Heart right ventricle (tissue), 16 donors: ENCODE measurements at regions of chr1 and their contacts with region 1.

Region 1: GRCh38 chr1:180178511-180179161 is 24.0 kb downstream of the QSOX1 start:
- DNase-seq: peak; percentile 52 to 72
- ATAC-seq: peak in 2 of 8 donors; percentile 28 to 31
- H3K4me3 ChIP-seq: no peak overlapping the region
- H3K27ac ChIP-seq: no peak overlapping the region
- H3K4me1 ChIP-seq: peaks cover 6 to 30% (median 21%) of the 10 kb centered on the region in 9 donors
- H3K27me3 ChIP-seq: no peaks in the 10 kb centered on the region
- CTCF ChIP-seq: peak; percentile 91 to 97 (median 96)

Region 2: GRCh38 chr1:179706339-179706941 is 472.2 kb before region 1 on chr1:
- intact Hi-C with region 1: loop called in 3 of 10 experiments (anchors 5 to 10 kb)
- DNase-seq: peak; percentile 24 to 70
- ATAC-seq: no peak
- H3K4me3 ChIP-seq: no peak overlapping the region
- H3K27ac ChIP-seq: peak overlapping the region in 1 of 10 donors; percentile 30
- H3K4me1 ChIP-seq: peaks cover 3 to 40% (median 23%) of the 10 kb centered on the region in 9 donors
- H3K27me3 ChIP-seq: peaks cover 0 to 4% (median 0%) of the 10 kb centered on the region in 7 donors
- CTCF ChIP-seq: peak; percentile 58 to 89 (median 79)

Region 3: GRCh38 chr1:179867807-179868330 is 310.8 kb before region 1 on chr1:
- intact Hi-C with region 1: loop called in 8 of 10 experiments (anchors 5 to 10 kb)
- DNase-seq: peak in 1 of 2 donors; percentile 25
- ATAC-seq: peak in 5 of 8 donors; percentile 29 to 74 (median 53)
- H3K4me3 ChIP-seq: no peak overlapping the region
- H3K27ac ChIP-seq: no peak overlapping the region
- H3K4me1 ChIP-seq: peaks cover 0 to 45% (median 30%) of the 10 kb centered on the region in 9 donors
- H3K27me3 ChIP-seq: no peaks in the 10 kb centered on the region
- CTCF ChIP-seq: peak; percentile 23 to 82 (median 64)

Region 4: GRCh38 chr1:179882243-179883039 is 296.2 kb before region 1 on chr1 and contains the start of gene TOR1AIP1:
- intact Hi-C with region 1: loop called in 1 of 10 experiments (anchors 10 kb)
- DNase-seq: peak; percentile 97 to 98
- ATAC-seq: peak; percentile 94 to 98 (median 96)
- H3K4me3 ChIP-seq: peak within 1 kb of the TSS; percentile 64 to 90 (median 79)
- H3K27ac ChIP-seq: peak within 1 kb of the TSS; percentile 95 to 100 (median 99)
- H3K4me1 ChIP-seq: peaks cover 3 to 62% (median 57%) of the 10 kb centered on the region in 9 donors
- H3K27me3 ChIP-seq: no peaks in the 10 kb centered on the region
- CTCF ChIP-seq: peak; percentile 27 to 62 (median 40)
- total RNA-seq, gene TOR1AIP1: 31.6 to 50.3 (median 46.0) TPM

Region 5: GRCh38 chr1:180080433-180080832 is 98.2 kb before region 1 on chr1:
- intact Hi-C with region 1: loop called in 1 of 10 experiments (anchors 10 kb)
- DNase-seq: no peak
- ATAC-seq: no peak
- H3K4me3 ChIP-seq: no peak overlapping the region
- H3K27ac ChIP-seq: no peak overlapping the region
- H3K4me1 ChIP-seq: no peaks in the 10 kb centered on the region
- H3K27me3 ChIP-seq: no peaks in the 10 kb centered on the region
- CTCF ChIP-seq: no peak

Region 6: GRCh38 chr1:180092931-180093559 is 85.6 kb before region 1 on chr1:
- intact Hi-C with region 1: loop called in 3 of 10 experiments (anchors 5 to 10 kb)
- DNase-seq: no peak
- ATAC-seq: no peak
- H3K4me3 ChIP-seq: no peak overlapping the region
- H3K27ac ChIP-seq: no peak overlapping the region
- H3K4me1 ChIP-seq: no peaks in the 10 kb centered on the region
- H3K27me3 ChIP-seq: no peaks in the 10 kb centered on the region
- CTCF ChIP-seq: no peak

Region 7: GRCh38 chr1:180116964-180117763 is 61.5 kb before region 1 on chr1:
- intact Hi-C with region 1: loop called in 8 of 10 experiments (anchors 2 to 10 kb)
- DNase-seq: peak in 1 of 2 donors; percentile 15
- ATAC-seq: peak; percentile 21 to 88 (median 72)
- H3K4me3 ChIP-seq: no peak overlapping the region
- H3K27ac ChIP-seq: peak overlapping the region in 2 of 10 donors; percentile 2 to 24
- H3K4me1 ChIP-seq: peaks cover 5 to 45% (median 31%) of the 10 kb centered on the region in 9 donors
- H3K27me3 ChIP-seq: no peaks in the 10 kb centered on the region
- CTCF ChIP-seq: no peak

Region 8: DNA sequence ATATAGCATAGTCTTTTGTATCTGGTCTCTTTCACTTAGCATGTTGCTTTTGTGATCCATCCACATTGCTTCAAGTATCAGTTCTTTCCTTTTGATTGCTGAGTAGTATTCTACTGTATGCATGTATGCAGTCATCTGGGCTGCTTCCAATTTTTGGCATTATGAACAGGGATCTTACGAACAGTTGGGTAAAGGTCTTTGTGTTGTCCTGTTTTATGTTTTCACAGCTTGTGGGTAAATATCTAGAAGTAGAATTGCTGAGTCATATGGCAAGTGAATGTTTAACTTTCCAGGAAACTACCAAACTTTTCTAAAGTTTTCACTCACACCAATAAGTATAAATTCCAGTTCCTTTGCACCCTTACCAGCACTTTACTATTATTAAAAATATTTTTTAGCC is 112.4 kb after region 1 on chr1:
- intact Hi-C with region 1: no loop called
- DNase-seq: no peak
- ATAC-seq: no peak
- H3K4me3 ChIP-seq: no peak overlapping the region
- H3K27ac ChIP-seq: no peak overlapping the region
- H3K4me1 ChIP-seq: peaks cover 0 to 13% (median 0%) of the 10 kb centered on the region in 9 donors
- H3K27me3 ChIP-seq: no peaks in the 10 kb centered on the region
- CTCF ChIP-seq: no peak